ENCODE measurements at regions of chr6 and their contacts with region 1.

Region 1: DNA sequence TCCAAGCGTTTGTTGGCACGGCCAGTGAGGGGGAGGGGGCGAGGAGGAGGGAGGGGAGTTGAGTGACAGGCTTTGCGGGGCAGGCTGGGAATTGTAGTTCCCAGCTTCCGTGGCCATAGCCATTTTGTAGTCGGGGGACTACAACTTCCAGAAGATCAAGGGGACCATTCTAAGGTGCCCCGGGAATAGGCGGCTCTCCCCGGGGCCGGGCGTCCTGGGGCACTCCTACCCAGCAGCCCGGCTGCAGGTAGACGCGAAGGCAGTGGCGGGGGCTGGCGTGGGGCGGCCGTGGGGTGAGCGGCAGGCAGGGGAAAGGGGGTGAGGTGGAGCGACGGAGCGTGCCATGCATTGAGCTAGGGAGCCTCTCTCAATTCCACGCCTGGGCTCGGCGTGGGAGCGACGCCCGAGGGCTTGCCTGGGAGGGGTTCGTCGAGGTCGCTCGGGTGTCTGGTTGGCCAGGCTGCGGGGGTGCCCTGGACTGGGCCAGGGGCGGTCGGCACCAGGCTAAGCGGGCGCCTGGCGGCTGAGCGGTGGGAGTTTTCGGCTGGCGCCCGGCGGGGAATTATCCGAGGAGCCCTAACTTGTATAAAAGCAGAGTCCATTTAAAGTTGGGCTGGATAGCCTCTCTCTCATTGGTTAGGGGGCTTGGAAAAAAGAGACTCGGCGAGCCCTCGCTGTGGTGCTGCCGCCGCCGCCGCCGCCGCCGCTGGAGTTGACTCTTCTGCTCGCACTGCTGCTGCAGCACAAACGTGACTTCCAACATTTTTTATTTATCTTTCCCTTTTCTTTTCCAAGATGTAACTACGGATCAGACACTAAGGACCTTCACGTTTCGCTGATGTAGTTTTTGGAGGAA is at the start of gene JARID2:
- DNase-seq: peak; percentile 100
- ATAC-seq: peak; percentile 92
- H3K4me3 ChIP-seq: peak within 1 kb of the TSS; percentile 86 to 100
- H3K27ac ChIP-seq: peak within 1 kb of the TSS; percentile 49 to 82
- H3K4me1 ChIP-seq: no peaks in the 10 kb centered on the region
- H3K27me3 ChIP-seq: no peaks in the 10 kb centered on the region
- total RNA-seq, gene JARID2: 11.0 to 13.0 TPM

Region 2: DNA sequence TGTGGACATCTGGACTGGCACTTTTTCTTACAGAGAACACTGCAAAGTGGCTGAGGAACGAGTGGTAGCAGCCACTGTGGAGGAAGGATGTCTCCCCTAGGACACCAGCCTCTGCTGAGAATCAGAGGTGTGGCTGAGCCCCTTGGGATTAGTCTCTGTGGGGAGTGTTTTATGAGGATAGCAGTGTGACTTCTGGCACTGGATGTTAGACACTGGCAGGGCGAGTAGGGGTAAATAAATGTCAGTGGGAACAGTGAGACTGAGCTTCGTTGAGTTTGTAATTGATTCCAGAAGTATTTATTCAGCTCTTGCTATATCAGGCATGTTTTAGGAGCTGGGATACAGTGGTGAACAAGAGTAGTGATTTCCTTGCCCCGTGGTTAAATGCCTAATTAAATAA is 124.2 kb after region 1 on chr6:
- intact Hi-C with region 1: no loop called
- DNase-seq: no peak
- ATAC-seq: no peak
- H3K4me3 ChIP-seq: no peak overlapping the region
- H3K27ac ChIP-seq: no peak overlapping the region
- H3K4me1 ChIP-seq: no peaks in the 10 kb centered on the region
- H3K27me3 ChIP-seq: no peaks in the 10 kb centered on the region

Region 3: DNA sequence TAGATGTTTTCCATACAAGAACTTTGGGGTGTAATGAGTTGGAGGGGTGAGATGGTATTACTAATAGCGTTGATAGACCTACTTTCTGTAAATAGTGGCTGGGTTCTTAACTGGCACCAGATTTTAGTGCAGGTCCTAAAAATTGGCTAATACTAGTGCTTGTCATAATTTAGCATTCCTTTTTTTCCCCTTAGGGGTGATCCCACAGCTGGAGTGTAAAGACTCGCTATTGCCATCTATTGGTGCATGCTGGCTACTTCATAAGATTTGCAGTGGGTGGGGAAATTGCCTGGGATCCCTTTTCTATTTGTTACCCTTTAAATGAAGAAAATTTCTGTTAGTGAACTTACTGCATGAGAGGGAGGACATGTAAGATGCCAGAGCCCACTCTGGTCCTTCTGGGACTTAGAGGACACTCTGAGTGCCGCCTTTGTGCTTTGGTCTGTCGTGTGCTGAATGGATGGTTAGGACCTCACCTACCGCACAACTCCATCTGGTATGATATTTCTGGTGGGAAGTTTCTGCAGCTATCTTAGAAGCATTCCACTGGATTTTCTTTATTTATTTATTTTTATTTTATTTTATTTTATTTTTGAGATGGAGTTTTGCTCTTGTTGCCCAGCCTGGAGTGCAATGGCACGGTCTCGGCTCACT is 195.8 kb after region 1 on chr6:
- intact Hi-C with region 1: loop called in 1 of 2 experiments (anchors 5 kb)
- DNase-seq: no peak
- ATAC-seq: peak; percentile 83
- H3K4me3 ChIP-seq: no peak overlapping the region
- H3K27ac ChIP-seq: no peak overlapping the region
- H3K4me1 ChIP-seq: peaks cover 0 to 3% of the 10 kb centered on the region in 2 donors
- H3K27me3 ChIP-seq: no peaks in the 10 kb centered on the region

Region 4: DNA sequence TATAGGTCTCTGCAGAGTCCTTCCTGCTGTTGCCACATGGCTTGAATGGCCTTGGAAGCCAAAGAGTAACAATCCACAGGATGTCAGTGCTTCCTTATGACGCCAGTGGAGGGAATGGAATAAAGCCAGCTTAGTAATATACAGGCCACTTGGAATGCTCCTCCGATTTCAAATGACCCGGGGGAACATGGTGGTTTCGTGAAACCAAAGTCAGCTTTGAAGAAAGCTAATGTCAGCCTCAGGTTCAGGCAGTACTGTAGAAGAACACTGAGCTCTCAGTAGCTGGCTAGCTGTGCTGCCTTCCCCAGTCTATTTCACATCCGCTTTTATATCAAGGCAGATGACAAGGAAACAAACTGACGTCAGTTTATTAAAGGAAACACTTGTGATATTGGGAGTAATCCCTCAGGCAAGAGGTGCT is 228.2 kb after region 1 on chr6:
- intact Hi-C with region 1: loop called in 1 of 2 experiments (anchors 10 kb)
- DNase-seq: no peak
- ATAC-seq: no peak
- H3K4me3 ChIP-seq: no peak overlapping the region
- H3K27ac ChIP-seq: no peak overlapping the region
- H3K4me1 ChIP-seq: peaks cover 7 to 13% of the 10 kb centered on the region in 2 donors
- H3K27me3 ChIP-seq: no peaks in the 10 kb centered on the region

Measured in aorta (tissue), 5 donors.